CD4-positive, alpha-beta T cell (primary cell): ENCODE measurements at regions of chr17 and their contacts with region 1.

Region 1: DNA sequence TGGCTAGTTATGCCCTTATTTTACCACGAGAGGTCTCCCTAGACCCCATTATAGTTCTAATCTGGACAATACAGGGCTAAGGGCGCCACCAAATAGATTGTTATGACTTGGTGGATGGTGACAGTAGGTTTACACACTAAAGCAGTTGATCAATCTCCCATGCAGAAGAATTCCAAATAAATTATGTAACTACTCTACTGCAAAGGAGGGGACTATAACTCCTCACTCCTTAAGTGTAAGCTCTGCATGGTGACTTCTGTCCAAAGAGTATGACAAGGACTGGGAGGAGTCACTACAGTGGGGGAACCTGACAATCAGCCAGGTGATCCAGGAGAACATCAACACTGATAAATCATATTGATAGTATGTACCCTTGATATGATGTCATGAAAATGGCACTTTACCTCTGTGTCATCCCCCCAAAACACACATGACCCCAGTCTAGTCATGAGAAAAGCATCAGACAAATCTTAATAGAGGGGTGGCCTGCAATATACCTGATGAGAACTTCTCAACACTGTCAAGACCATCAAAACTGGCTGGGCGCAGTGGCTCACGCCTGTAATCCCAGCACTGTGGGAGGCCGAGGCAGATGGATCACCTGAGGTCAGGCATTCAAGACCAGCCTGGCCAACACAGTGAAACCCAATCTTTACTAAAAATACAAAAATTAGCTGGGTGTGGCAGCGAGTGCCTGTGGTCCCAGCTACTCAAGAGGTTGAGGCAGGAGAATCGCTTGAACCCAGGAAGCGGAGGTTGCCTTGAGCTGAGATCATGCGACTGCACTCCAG is 20.1 kb upstream of the YPEL2 start:
- DNase-seq: peak in 7 of 14 experiments; percentile 18 to 80 (median 57)
- ATAC-seq: peak; percentile 99
- H3K4me3 ChIP-seq: no peak overlapping the region
- H3K4me3 Mint-ChIP-seq: no peak overlapping the region
- H3K27ac ChIP-seq: no peak overlapping the region
- H3K27ac Mint-ChIP-seq: no peak overlapping the region
- H3K4me1 ChIP-seq: no peaks in the 10 kb centered on the region
- H3K4me1 Mint-ChIP-seq: peaks cover 6% of the 10 kb centered on the region
- H3K27me3 ChIP-seq: no peaks in the 10 kb centered on the region
- H3K27me3 Mint-ChIP-seq: no peaks in the 10 kb centered on the region
- CTCF ChIP-seq: peak; percentile 89

Region 2: DNA sequence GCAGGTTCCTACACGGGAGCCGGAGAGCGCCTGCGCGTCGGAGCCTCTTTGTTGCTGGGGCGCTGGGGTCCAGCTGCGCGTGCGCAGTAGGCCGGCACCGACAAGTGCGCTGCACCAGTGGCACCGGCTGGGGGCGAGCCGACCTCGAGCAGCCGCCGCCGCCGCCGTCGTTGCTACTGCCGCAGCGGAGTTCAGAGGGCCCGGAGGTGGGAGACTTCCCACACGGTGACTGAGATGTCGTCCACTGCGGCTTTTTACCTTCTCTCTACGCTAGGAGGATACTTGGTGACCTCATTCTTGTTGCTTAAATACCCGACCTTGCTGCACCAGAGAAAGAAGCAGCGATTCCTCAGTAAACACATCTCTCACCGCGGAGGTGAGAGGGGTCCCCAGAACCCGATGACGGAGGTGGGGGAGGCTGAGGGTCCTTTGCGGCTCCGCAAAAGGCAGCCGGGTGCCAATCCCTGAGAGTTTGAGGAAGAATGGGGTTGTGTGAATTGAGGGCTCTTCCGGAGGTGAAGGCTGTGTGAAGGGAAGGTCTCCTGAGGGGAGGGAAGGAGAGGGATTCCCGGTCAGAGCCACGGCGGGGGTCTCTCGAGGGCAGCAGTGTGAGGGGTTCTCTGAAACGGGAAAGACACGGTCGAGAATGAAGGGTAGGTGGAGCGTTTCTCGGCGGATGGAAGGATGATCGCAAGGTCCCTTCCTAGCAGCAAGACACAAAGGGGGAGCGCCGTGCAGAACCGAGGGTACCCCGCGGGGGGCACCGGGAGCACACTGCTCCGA is 90.8 kb before region 1 on chr17 and contains the start of gene GDPD1:
- CTCF ChIA-PET with region 1: no interaction called
- POLR2A ChIA-PET with region 1: no interaction called
- intact Hi-C with region 1: loop called in 1 of 2 experiments (anchors 5 kb)
- DNase-seq: peak; percentile 94 to 99 (median 97)
- ATAC-seq: peak; percentile 97
- H3K4me3 ChIP-seq: peak within 1 kb of the TSS; percentile 67
- H3K4me3 Mint-ChIP-seq: peak within 1 kb of the TSS; percentile 96
- H3K27ac ChIP-seq: peak within 1 kb of the TSS; percentile 66 to 87
- H3K27ac Mint-ChIP-seq: peak within 1 kb of the TSS; percentile 99
- H3K4me1 ChIP-seq: peaks cover 10% of the 10 kb centered on the region
- H3K4me1 Mint-ChIP-seq: peaks cover 16% of the 10 kb centered on the region
- H3K27me3 ChIP-seq: no peaks in the 10 kb centered on the region
- H3K27me3 Mint-ChIP-seq: no peaks in the 10 kb centered on the region
- CTCF ChIP-seq: peak; percentile 79
- total RNA-seq, gene GDPD1: 2.0 to 2.3 TPM

Region 3: GRCh38 chr17:59440784-59441441 is 129.6 kb after region 1 on chr17:
- CTCF ChIA-PET with region 1: interaction called, 46 read pairs
- POLR2A ChIA-PET with region 1: interaction called, 12 read pairs
- intact Hi-C with region 1: loop called (anchors 1 kb)
- DNase-seq: peak; percentile 69 to 96 (median 84)
- ATAC-seq: peak; percentile 98
- H3K4me3 ChIP-seq: no peak overlapping the region
- H3K4me3 Mint-ChIP-seq: peak overlapping the region; percentile 9
- H3K27ac ChIP-seq: no peak overlapping the region
- H3K27ac Mint-ChIP-seq: peak overlapping the region; percentile 1
- H3K4me1 ChIP-seq: peaks cover 18% of the 10 kb centered on the region
- H3K4me1 Mint-ChIP-seq: peaks cover 19% of the 10 kb centered on the region
- H3K27me3 ChIP-seq: no peaks in the 10 kb centered on the region
- H3K27me3 Mint-ChIP-seq: no peaks in the 10 kb centered on the region
- CTCF ChIP-seq: peak; percentile 87

Region 4: DNA sequence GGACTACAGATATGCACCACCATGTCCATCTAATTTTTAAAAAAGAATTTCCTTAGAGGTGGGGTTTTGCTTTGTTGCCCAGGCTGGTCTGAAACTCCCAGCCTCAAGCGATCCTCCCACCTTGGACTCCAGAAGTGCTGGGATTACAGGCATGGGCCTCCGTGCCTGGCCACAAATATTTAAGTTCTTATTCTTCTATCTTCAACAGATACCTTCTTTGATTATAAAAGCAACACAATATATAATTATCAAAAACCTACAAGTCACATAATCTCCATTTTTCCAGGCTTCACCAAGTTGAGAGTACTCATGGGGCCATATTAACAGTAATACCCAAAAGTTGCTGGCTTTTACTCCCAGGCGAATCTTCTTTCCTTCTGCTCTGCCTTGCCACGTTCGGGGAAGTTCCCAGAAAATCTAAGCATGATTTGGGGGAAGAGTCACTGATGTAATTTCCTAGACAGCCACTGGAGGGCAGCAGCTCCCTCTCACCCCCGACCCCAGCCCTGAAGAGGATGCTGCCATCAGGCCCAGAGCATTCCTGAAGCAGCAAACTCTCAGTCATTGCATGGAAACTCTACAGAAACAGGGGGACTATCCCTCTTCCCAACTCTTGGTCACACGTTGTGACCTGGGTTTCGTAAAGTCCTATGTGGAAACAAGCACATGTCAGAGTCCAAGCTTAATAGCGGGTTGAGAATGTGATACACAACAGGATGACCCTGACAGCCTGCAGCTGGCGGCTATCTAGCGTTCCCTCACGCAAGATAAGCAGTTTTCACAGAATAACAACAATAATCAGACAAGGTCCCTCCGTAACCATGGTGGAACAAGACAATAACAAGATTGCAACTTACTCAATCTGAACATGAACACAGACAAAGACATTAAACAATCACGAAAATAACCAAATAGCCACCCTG is 210.1 kb after region 1 on chr17:
- CTCF ChIA-PET with region 1: interaction called, 4 read pairs
- POLR2A ChIA-PET with region 1: no interaction called
- intact Hi-C with region 1: loop called (anchors 1 kb)
- DNase-seq: peak; percentile 27 to 81 (median 44)
- ATAC-seq: peak; percentile 78
- H3K4me3 ChIP-seq: no peak overlapping the region
- H3K4me3 Mint-ChIP-seq: no peak overlapping the region
- H3K27ac ChIP-seq: no peak overlapping the region
- H3K27ac Mint-ChIP-seq: no peak overlapping the region
- H3K4me1 ChIP-seq: peaks cover 4% of the 10 kb centered on the region
- H3K4me1 Mint-ChIP-seq: no peaks in the 10 kb centered on the region
- H3K27me3 ChIP-seq: no peaks in the 10 kb centered on the region
- H3K27me3 Mint-ChIP-seq: peaks cover 11% of the 10 kb centered on the region
- CTCF ChIP-seq: peak; percentile 98